PC-3 (cell line): ENCODE measurements at regions of chr17 and their contacts with region 1.

Region 1: DNA sequence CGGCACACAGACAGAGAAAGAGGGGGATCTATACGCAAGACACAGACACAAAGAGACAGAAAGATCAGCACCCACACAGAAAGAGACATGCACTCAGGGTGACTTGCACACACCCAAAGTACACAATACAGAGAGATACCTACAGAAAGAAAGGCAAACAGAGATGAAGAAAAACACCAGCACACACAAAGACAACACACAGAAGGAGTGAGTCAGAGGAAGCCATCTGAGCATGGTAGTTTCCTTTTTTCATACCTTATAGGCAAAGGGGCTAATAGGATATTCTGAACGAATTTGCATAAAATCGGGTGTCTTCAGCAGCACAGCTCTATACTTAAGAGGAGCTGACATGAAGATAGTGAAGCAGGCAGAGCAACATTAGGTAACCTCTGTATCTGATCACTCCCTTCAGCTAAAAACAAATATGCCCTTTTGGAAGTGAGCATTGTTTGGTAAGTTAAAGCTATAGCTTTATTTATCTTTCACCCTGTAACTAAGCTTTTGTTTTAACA is 198.6 kb downstream of the AATF start:
- DNase-seq: peak; percentile 68
- ATAC-seq: peak; percentile 97
- H3K4me3 ChIP-seq: peak overlapping the region; percentile 18; the same call in 1 of the 2 replicates
- H3K27ac ChIP-seq: peak overlapping the region; percentile 47
- H3K4me1 ChIP-seq: peaks cover 18% of the 10 kb centered on the region
- H3K27me3 ChIP-seq: no peaks in the 10 kb centered on the region
- CTCF ChIP-seq: no peak

Region 2: DNA sequence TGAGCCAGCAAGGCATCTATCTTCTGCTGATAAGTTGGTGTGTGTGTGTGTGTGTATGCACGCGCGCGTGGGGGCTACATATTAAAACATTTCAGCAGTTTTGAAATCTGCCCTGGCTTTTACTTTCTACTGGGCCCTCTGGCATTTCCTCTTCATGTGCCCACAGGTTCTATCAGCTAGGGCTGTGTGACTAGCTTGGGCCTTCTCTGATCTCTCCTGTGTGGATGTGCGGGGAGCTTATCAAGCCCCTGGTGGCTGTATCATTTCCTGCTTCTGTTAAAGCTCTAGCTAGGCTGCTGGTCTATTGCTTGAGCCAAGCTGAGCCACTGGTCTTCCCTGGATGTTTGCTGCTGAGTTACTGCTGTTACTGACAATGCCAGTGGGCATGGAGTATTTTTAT is 66.1 kb before region 1 on chr17:
- CTCF ChIA-PET with region 1: no interaction called
- POLR2A ChIA-PET with region 1: no interaction called
- intact Hi-C with region 1: no loop called
- DNase-seq: no peak
- ATAC-seq: no peak
- H3K4me3 ChIP-seq: no peak overlapping the region
- H3K27ac ChIP-seq: no peak overlapping the region
- H3K4me1 ChIP-seq: no peaks in the 10 kb centered on the region
- H3K27me3 ChIP-seq: no peaks in the 10 kb centered on the region
- CTCF ChIP-seq: no peak

Region 3: DNA sequence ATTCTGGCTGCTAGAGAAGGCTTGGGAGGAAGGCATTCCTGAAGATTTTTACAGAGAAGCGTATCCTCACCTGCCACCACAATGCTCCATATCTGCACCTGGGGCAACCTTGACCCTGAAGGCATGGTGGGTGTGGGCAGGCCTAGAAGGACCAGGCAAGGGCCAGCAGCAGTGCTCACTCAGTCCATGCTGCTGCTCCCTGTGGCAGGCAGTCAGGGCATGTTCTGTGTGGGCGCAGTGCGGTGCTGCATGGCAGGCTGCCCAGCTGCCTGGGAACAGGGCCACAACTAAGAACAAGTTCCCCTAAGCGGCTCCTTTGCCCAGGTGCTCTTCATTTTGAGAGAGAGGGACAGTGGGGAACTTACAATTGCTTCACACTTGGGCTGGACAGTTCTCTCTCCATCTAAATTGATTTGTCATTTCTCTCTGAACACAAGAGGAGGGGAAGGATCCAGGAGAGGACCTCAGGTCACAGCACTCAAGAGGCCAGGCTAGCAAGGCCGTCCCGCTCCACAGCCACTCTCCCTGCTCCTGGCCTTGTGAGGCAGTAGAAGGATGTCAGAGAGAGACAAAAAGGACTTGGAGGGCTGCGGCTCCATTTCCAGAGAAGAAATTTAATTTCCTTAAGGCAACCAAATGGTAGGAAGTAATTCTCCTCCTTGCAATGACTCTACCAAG is 39.8 kb before region 1 on chr17:
- CTCF ChIA-PET with region 1: no interaction called
- POLR2A ChIA-PET with region 1: no interaction called
- intact Hi-C with region 1: no loop called
- DNase-seq: no peak
- ATAC-seq: no peak
- H3K4me3 ChIP-seq: no peak overlapping the region
- H3K27ac ChIP-seq: no peak overlapping the region
- H3K4me1 ChIP-seq: no peaks in the 10 kb centered on the region
- H3K27me3 ChIP-seq: no peaks in the 10 kb centered on the region
- CTCF ChIP-seq: no peak

Region 4: GRCh38 chr17:37130984-37131446 is 16.3 kb before region 1 on chr17:
- CTCF ChIA-PET with region 1: no interaction called
- POLR2A ChIA-PET with region 1: interaction called, 27 read pairs
- intact Hi-C with region 1: no loop called
- DNase-seq: no peak
- ATAC-seq: no peak
- H3K4me3 ChIP-seq: no peak overlapping the region
- H3K27ac ChIP-seq: no peak overlapping the region
- H3K4me1 ChIP-seq: no peaks in the 10 kb centered on the region
- H3K27me3 ChIP-seq: no peaks in the 10 kb centered on the region
- CTCF ChIP-seq: no peak

Region 5: GRCh38 chr17:37190493-37190892 is 43.1 kb after region 1 on chr17:
- CTCF ChIA-PET with region 1: no interaction called
- POLR2A ChIA-PET with region 1: no interaction called
- intact Hi-C with region 1: loop called (anchors 5 kb)
- DNase-seq: no peak
- ATAC-seq: no peak
- H3K4me3 ChIP-seq: no peak overlapping the region
- H3K27ac ChIP-seq: no peak overlapping the region
- H3K4me1 ChIP-seq: 0 out of 2 replicates have a peak, but pooled peaks cover 2% of the 10 kb centered on the region
- H3K27me3 ChIP-seq: no peaks in the 10 kb centered on the region
- CTCF ChIP-seq: peak; percentile 15; the same call in 1 of the 2 replicates